ENCODE measurements at regions of chr14 and their contacts with region 1.

Region 1: DNA sequence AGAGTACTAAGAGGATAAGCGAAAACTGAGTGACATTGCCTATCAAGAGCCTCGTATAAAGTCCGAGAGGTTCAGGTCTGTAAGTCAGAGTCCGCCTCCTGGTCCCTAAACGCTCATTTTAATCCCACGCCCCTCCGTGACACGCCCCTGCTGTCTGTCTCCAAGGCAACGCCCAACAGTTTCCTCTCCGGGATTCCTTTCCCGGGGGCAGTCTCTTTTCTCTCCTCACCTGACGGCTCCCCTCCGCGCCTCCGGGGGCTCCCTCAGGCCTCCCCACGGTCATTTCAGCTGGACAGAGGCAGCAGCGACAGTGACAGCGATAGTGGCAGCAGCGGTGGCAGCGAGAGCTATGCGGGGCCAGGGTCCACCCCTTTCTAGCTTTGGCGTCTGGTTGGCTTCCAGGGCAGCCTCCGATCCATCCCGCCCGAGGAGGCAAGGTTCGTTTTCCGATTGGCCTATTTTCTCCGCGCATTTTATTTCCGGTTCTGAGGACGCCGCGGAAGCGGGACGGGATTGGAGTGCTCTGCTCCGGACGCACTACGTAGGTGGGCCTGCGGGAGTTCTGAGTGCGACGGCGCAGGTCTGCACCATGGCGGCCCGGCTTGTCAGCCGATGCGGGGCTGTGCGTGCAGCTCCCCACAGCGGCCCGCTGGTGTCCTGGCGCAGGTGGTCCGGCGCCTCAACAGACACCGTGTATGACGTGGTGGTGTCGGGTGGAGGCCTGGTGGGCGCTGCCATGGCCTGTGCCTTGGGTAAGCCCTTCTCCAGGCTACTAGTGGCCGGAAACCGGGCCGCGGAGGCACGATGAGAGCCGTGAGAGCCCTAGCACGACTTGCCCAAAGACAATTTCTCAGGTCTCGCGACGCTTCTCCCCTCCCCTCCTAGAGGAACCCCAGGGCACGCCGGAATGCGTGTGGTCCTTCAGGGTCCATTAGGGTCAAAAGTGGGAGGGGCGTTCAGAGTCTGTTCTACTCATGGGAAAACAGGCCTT is at the starts of genes COQ6 and FAM161B:
- DNase-seq: peak; percentile 93 to 96
- ATAC-seq: peak; percentile 95 to 98 (median 96)
- H3K4me3 ChIP-seq: peak within 1 kb of the TSS; percentile 87
- H3K27ac ChIP-seq: peak within 1 kb of the TSS; percentile 96
- H3K4me1 ChIP-seq: peaks cover 6% of the 10 kb centered on the region
- H3K27me3 ChIP-seq: no peaks in the 10 kb centered on the region
- CTCF ChIP-seq: no peak
- total RNA-seq, gene COQ6: 25.7 to 40.3 (median 31.3) TPM
- total RNA-seq, gene FAM161B: 5.0 to 6.4 (median 5.4) TPM

Region 2: GRCh38 chr14:73896521-73896920 is 53.5 kb before region 1 on chr14:
- intact Hi-C with region 1: loop called in 1 of 2 experiments (anchors 5 kb)
- DNase-seq: no peak
- ATAC-seq: no peak
- H3K4me3 ChIP-seq: no peak overlapping the region
- H3K27ac ChIP-seq: peak overlapping the region; percentile 47
- H3K4me1 ChIP-seq: peaks cover 8% of the 10 kb centered on the region
- H3K27me3 ChIP-seq: no peaks in the 10 kb centered on the region
- CTCF ChIP-seq: no peak

Region 3: GRCh38 chr14:73997108-73997943 is 47.3 kb after region 1 on chr14:
- intact Hi-C with region 1: no loop called
- DNase-seq: no peak
- ATAC-seq: no peak
- H3K4me3 ChIP-seq: no peak overlapping the region
- H3K27ac ChIP-seq: no peak overlapping the region
- H3K4me1 ChIP-seq: no peaks in the 10 kb centered on the region
- H3K27me3 ChIP-seq: no peaks in the 10 kb centered on the region
- CTCF ChIP-seq: no peak

Region 4: GRCh38 chr14:74018586-74019407 is 68.8 kb after region 1 on chr14 and contains the starts of genes BBOF1 and ENTPD5:
- intact Hi-C with region 1: loop called in 1 of 2 experiments (anchors 2 kb)
- DNase-seq: peak; percentile 88 to 93
- ATAC-seq: peak; percentile 97 to 99 (median 98)
- H3K4me3 ChIP-seq: peak within 1 kb of the TSS; percentile 97
- H3K27ac ChIP-seq: peak within 1 kb of the TSS; percentile 99
- H3K4me1 ChIP-seq: peaks cover 3% of the 10 kb centered on the region
- H3K27me3 ChIP-seq: no peaks in the 10 kb centered on the region
- CTCF ChIP-seq: no peak
- total RNA-seq, gene BBOF1: 1.0 to 1.7 (median 1.3) TPM
- total RNA-seq, gene ENTPD5: 5.2 to 11.5 (median 9.1) TPM

Region 5: GRCh38 chr14:74275241-74275841 is 325.3 kb after region 1 on chr14:
- intact Hi-C with region 1: no loop called
- DNase-seq: no peak
- ATAC-seq: peak; percentile 41 to 75 (median 70)
- H3K4me3 ChIP-seq: no peak overlapping the region
- H3K27ac ChIP-seq: no peak overlapping the region
- H3K4me1 ChIP-seq: no peaks in the 10 kb centered on the region
- H3K27me3 ChIP-seq: no peaks in the 10 kb centered on the region
- CTCF ChIP-seq: no peak

Region 6: GRCh38 chr14:74493343-74494261 is 543.6 kb after region 1 on chr14 and contains the start of gene ISCA2:
- intact Hi-C with region 1: loop called in 1 of 2 experiments (anchors 5 kb)
- DNase-seq: peak; percentile 100
- ATAC-seq: peak; percentile 95 to 97 (median 96)
- H3K4me3 ChIP-seq: peak within 1 kb of the TSS; percentile 82
- H3K27ac ChIP-seq: peak within 1 kb of the TSS; percentile 87
- H3K4me1 ChIP-seq: peaks cover 22% of the 10 kb centered on the region
- H3K27me3 ChIP-seq: no peaks in the 10 kb centered on the region
- CTCF ChIP-seq: no peak
- total RNA-seq, gene ISCA2: 24.5 to 38.8 (median 26.0) TPM

Measured in psoas muscle (tissue), 8 donors.